ENCODE measurements at regions of chr7 and their contacts with region 1.

Region 1: DNA sequence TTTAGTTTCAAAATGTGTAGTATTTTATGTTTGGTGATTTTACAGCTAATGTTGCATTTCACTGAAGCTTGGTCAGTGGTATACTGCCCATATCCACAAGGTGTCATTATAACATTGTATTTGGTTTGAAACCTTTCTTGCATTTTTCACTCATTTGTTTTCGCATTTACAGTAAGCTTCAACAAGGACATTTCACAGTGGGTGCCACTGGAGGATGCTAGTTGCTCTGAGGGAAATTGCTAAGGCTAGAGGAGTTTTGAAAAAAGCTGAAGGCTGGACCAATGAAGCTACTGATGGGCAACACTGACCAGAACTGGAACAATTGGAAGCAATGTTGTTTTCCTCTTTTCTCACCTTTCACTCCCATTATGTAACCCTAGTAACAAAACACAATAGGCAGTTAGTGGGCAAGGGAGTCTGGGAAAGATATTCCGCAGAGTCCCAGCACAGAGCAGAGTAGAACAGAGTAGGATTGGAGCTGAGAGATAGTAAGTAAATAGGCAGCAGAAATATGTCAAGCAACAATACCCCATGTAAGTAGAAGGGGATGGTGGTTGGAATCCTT is 23.6 kb upstream of the SRI start:
- DNase-seq: no peak
- H3K4me3 Mint-ChIP-seq: no peak overlapping the region
- H3K27ac Mint-ChIP-seq: no peak overlapping the region
- H3K4me1 Mint-ChIP-seq: no peaks in the 10 kb centered on the region
- H3K27me3 Mint-ChIP-seq: peaks cover 7% of the 10 kb centered on the region

Region 2: GRCh38 chr7:88357781-88358525 is 114.5 kb after region 1 on chr7:
- CTCF ChIA-PET with region 1: interaction called, 7 read pairs
- POLR2A ChIA-PET with region 1: no interaction called
- intact Hi-C with region 1: loop called (anchors 1 kb)
- DNase-seq: no peak
- H3K4me3 Mint-ChIP-seq: no peak overlapping the region
- H3K27ac Mint-ChIP-seq: no peak overlapping the region
- H3K4me1 Mint-ChIP-seq: peaks cover 2% of the 10 kb centered on the region
- H3K27me3 Mint-ChIP-seq: peaks cover 10% of the 10 kb centered on the region

Measured in activated CD4-positive, alpha-beta memory T cell treated with anti-CD3 and anti-CD28 coated beads for 36 hours (primary cell).